Upper lobe of right lung (tissue), 1 donor: ENCODE measurements at regions of chr1 and their contacts with region 1.

Region 1: GRCh38 chr1:161749509-161750407 is at the start of gene DUSP12:
- DNase-seq: peak; percentile 96
- ATAC-seq: peak; percentile 99
- H3K4me3 ChIP-seq: peak within 1 kb of the TSS; percentile 89
- H3K27ac ChIP-seq: peak within 1 kb of the TSS; percentile 89
- H3K4me1 ChIP-seq: peaks cover 12% of the 10 kb centered on the region
- H3K27me3 ChIP-seq: no peaks in the 10 kb centered on the region
- CTCF ChIP-seq: no peak
- total RNA-seq, gene DUSP12: 19.3 TPM

Region 2: GRCh38 chr1:161486806-161487741 is 262.7 kb before region 1 on chr1:
- intact Hi-C with region 1: loop called (anchors 10 kb)
- DNase-seq: no peak
- ATAC-seq: peak; percentile 89
- H3K4me3 ChIP-seq: no peak overlapping the region
- H3K27ac ChIP-seq: no peak overlapping the region
- H3K4me1 ChIP-seq: peaks cover 3% of the 10 kb centered on the region
- H3K27me3 ChIP-seq: peaks cover 2% of the 10 kb centered on the region
- CTCF ChIP-seq: peak; percentile 88

Region 3: GRCh38 chr1:161691846-161692245 is 57.9 kb before region 1 on chr1:
- intact Hi-C with region 1: no loop called
- DNase-seq: no peak
- ATAC-seq: no peak
- H3K4me3 ChIP-seq: no peak overlapping the region
- H3K27ac ChIP-seq: no peak overlapping the region
- H3K4me1 ChIP-seq: no peaks in the 10 kb centered on the region
- H3K27me3 ChIP-seq: peaks cover 5% of the 10 kb centered on the region
- CTCF ChIP-seq: no peak